ENCODE measurements at regions of chr18 and their contacts with region 1.

Region 1: DNA sequence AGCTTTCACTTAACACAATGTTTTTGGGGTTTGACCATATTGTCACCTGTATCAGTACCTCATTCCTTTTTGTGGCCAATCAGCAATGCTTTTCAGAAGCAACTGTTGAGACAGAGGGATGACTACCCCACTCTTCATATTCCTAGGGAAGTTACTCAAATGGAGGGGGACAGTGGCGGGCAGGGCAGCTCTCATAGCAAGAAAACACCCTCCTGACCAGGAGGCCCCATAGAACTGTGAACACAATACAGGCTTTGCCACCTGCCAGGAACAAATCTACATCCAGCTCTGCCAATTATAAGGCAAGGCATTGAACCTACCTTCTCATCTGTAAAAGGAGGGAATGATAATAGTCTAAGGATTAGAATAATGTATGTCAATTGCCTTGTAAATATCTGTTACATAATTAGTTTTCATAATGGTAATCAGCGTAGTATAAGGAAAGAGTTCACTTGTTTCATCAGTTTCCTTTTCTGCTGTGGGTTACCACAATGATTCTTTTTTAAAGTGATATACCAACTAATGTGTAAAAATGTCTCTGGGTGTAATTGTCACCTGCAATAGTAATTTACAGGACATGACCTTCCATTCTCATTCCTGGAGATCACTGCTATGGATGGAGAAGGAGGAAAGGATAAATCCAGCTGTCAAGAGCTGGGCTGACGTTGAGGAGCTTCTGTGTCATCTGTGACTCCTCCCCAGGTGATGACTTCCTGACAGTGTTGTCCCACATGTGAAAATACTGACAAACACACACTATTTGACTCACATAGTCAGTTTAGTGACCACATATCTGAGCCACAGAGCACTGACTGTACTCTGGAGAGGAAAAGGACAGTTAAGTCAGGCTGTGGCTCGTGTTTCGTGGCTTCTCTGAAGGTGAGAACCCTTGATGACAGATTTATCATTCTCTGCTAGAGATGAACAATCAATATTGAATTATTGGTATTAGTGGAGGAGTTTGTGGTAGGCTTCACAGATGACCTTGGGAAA is 13.5 kb downstream of the ALPK2 start:
- DNase-seq: peak; percentile 91
- H3K4me3 Mint-ChIP-seq: peak overlapping the region; percentile 40
- H3K27ac Mint-ChIP-seq: peak overlapping the region; percentile 85
- H3K4me1 Mint-ChIP-seq: peaks cover 46% of the 10 kb centered on the region
- H3K27me3 Mint-ChIP-seq: no peaks in the 10 kb centered on the region

Region 2: DNA sequence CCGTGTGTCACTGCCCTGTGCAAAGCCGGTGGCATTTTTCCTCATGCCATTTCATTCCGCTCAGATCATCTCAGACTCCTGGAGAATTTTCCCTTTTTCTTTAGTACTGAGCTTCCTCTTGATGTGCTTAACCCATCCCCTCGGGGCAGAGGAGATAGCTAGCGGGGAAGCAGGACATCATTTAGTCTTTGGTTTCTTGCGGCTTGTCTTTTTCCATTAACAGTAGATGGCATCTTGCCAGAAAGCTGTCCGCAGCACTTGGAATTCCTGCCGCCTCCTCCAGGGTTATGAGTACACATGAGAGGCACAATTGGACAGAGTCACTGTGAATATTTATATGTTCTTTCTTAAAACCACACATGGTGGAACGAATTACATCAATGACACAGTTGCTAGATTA is 213.2 kb before region 1 on chr18:
- CTCF ChIA-PET with region 1: no interaction called
- intact Hi-C with region 1: loop called (anchors 2 kb)
- DNase-seq: no peak
- H3K4me3 Mint-ChIP-seq: no peak overlapping the region
- H3K27ac Mint-ChIP-seq: no peak overlapping the region
- H3K4me1 Mint-ChIP-seq: peaks cover 25% of the 10 kb centered on the region
- H3K27me3 Mint-ChIP-seq: no peaks in the 10 kb centered on the region

Region 3: GRCh38 chr18:58511897-58512581 is 103.4 kb before region 1 on chr18:
- CTCF ChIA-PET with region 1: no interaction called
- intact Hi-C with region 1: no loop called
- DNase-seq: no peak
- H3K4me3 Mint-ChIP-seq: no peak overlapping the region
- H3K27ac Mint-ChIP-seq: no peak overlapping the region
- H3K4me1 Mint-ChIP-seq: no peaks in the 10 kb centered on the region
- H3K27me3 Mint-ChIP-seq: no peaks in the 10 kb centered on the region

Region 4: GRCh38 chr18:58552057-58552461 is 63.4 kb before region 1 on chr18:
- CTCF ChIA-PET with region 1: no interaction called
- intact Hi-C with region 1: loop called (anchors 1 kb)
- DNase-seq: peak; percentile 73
- H3K4me3 Mint-ChIP-seq: no peak overlapping the region
- H3K27ac Mint-ChIP-seq: peak overlapping the region; percentile 68
- H3K4me1 Mint-ChIP-seq: peaks cover 51% of the 10 kb centered on the region
- H3K27me3 Mint-ChIP-seq: no peaks in the 10 kb centered on the region

Region 5: GRCh38 chr18:58605027-58606020 is 10.1 kb before region 1 on chr18:
- CTCF ChIA-PET with region 1: no interaction called
- intact Hi-C with region 1: loop called (anchors 1 kb)
- DNase-seq: peak; percentile 84
- H3K4me3 Mint-ChIP-seq: no peak overlapping the region
- H3K27ac Mint-ChIP-seq: no peak overlapping the region
- H3K4me1 Mint-ChIP-seq: peaks cover 60% of the 10 kb centered on the region
- H3K27me3 Mint-ChIP-seq: no peaks in the 10 kb centered on the region

Region 6: GRCh38 chr18:58687871-58688308 is 72.5 kb after region 1 on chr18:
- CTCF ChIA-PET with region 1: no interaction called
- intact Hi-C with region 1: loop called (anchors 1 kb)
- DNase-seq: peak; percentile 64
- H3K4me3 Mint-ChIP-seq: peak overlapping the region; percentile 70
- H3K27ac Mint-ChIP-seq: peak overlapping the region; percentile 87
- H3K4me1 Mint-ChIP-seq: peaks cover 78% of the 10 kb centered on the region
- H3K27me3 Mint-ChIP-seq: no peaks in the 10 kb centered on the region

Region 7: DNA sequence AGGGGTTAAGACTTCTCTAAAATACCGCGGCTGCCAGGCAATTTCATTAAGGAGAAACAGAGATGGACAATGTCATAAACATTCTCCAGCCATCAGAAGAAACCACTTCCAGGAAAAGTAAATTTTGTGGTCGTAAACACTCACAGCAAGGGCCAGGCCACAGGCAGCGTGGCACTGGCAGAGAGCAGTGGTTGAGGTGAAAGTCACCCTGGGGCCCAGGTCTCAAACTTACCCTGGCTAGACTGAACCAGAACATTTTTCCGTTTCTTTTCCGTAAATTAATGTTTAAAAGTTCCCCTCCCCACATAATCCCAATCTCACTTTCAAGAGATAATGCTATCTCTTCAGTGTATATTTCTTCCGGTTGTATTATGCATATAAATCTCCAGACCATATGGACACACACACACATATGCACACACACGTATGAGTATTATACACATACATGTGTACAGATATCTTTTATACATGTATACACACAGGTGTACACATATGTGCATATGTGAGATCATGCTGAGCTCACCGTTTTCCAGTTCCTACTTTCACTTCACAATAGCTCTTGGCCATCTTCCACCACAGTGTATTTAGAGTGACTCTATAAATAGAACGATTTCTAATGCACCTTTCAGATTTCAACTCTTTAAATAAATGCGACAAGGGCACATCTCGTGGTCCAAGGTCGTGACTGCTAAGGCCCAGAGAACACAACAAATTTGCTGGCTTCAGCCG is 146.0 kb after region 1 on chr18:
- CTCF ChIA-PET with region 1: interaction called, 12 read pairs
- intact Hi-C with region 1: loop called (anchors 5 kb)
- DNase-seq: no peak
- H3K4me3 Mint-ChIP-seq: no peak overlapping the region
- H3K27ac Mint-ChIP-seq: no peak overlapping the region
- H3K4me1 Mint-ChIP-seq: peaks cover 22% of the 10 kb centered on the region
- H3K27me3 Mint-ChIP-seq: peaks cover 18% of the 10 kb centered on the region

Region 8: GRCh38 chr18:58871514-58872420 is 256.3 kb after region 1 on chr18:
- CTCF ChIA-PET with region 1: no interaction called
- intact Hi-C with region 1: no loop called
- DNase-seq: no peak
- H3K4me3 Mint-ChIP-seq: no peak overlapping the region
- H3K27ac Mint-ChIP-seq: no peak overlapping the region
- H3K4me1 Mint-ChIP-seq: no peaks in the 10 kb centered on the region
- H3K27me3 Mint-ChIP-seq: peaks cover 18% of the 10 kb centered on the region